CD8-positive, alpha-beta memory T cell (primary cell): ENCODE measurements at regions of chr4 and their contacts with region 1.

Region 1: GRCh38 chr4:42568610-42569207 is 88.2 kb downstream of the ATP8A1 start:
- DNase-seq: peak; percentile 40 to 68 (median 52)
- H3K4me3 ChIP-seq: no peak overlapping the region
- H3K4me3 Mint-ChIP-seq: no peak overlapping the region
- H3K27ac ChIP-seq: no peak overlapping the region
- H3K27ac Mint-ChIP-seq: peak overlapping the region in 4 of 8 donors; percentile 6 to 43 (median 28)
- H3K4me1 ChIP-seq: no peaks in the 10 kb centered on the region
- H3K4me1 Mint-ChIP-seq: peaks cover 0 to 4% (median 3%) of the 10 kb centered on the region in 3 donors
- H3K27me3 ChIP-seq: no peaks in the 10 kb centered on the region
- H3K27me3 Mint-ChIP-seq: no peaks in the 10 kb centered on the region

Region 2: GRCh38 chr4:42420140-42420539 is 148.6 kb before region 1 on chr4:
- CTCF ChIA-PET with region 1: no interaction called
- POLR2A ChIA-PET with region 1: no interaction called
- DNase-seq: no peak
- H3K4me3 ChIP-seq: no peak overlapping the region
- H3K4me3 Mint-ChIP-seq: no peak overlapping the region
- H3K27ac ChIP-seq: no peak overlapping the region
- H3K27ac Mint-ChIP-seq: peak overlapping the region in 1 of 8 donors; percentile 56
- H3K4me1 ChIP-seq: no peaks in the 10 kb centered on the region
- H3K4me1 Mint-ChIP-seq: no peaks in the 10 kb centered on the region
- H3K27me3 ChIP-seq: no peaks in the 10 kb centered on the region
- H3K27me3 Mint-ChIP-seq: peaks cover 0 to 2% of the 10 kb centered on the region in 2 donors

Region 3: DNA sequence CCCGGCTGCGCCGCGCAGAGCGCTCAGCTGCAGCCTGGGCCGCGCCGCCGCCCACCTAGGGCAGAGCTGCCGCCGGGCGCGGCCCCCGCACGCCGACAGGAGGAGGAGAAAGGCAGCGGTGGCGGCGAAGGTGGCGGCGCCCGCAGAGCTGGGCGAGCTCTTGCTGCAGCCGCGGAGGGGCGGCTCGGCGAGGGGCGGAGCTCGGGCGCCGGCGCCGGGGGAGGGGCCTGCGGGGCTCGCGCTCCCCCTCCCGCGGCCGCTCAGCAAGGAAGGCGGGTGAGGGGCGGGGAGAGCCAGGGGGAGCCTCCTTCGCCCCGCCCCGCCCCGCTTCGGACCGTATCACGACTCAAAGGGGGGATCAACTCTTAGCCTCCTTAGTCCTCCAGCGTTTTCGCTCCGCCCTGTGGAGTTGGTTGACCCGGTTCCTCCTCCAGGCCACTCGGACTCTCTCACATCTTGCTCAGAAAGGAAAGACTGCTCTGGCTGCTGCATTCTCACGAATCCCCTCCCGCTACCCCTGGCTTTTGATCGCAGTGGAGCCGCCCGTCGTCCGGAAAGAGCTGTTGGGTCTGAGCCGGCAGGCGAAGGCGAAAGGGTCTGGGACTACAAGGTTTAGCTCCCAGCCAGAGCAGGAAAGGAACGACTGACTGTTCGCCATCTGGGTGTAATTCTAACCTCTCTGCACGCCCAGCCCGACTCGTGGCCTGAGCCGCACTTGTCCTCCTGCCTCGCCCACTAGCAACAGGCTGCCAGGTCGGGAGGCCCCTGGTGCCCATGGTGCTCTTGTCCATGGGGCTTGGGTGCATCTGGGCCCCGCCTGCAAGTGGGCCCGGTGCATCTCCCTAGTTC is 88.5 kb after region 1 on chr4 and contains the start of gene ATP8A1:
- CTCF ChIA-PET with region 1: interaction called, 11 read pairs
- POLR2A ChIA-PET with region 1: no interaction called
- DNase-seq: peak; percentile 91 to 94 (median 93)
- H3K4me3 ChIP-seq: peak within 1 kb of the TSS; percentile 95
- H3K4me3 Mint-ChIP-seq: peak within 1 kb of the TSS; percentile 96 to 99 (median 97)
- H3K27ac ChIP-seq: peak within 1 kb of the TSS; percentile 67
- H3K27ac Mint-ChIP-seq: peak within 1 kb of the TSS; percentile 93 to 99 (median 97)
- H3K4me1 ChIP-seq: peaks cover 31% of the 10 kb centered on the region
- H3K4me1 Mint-ChIP-seq: peaks cover 48 to 50% (median 50%) of the 10 kb centered on the region in 3 donors
- H3K27me3 ChIP-seq: no peaks in the 10 kb centered on the region
- H3K27me3 Mint-ChIP-seq: peaks cover 0 to 1% of the 10 kb centered on the region in 2 donors
- total RNA-seq, gene ATP8A1: 23.3 to 24.4 TPM

Region 4: GRCh38 chr4:42750091-42750490 is 181.4 kb after region 1 on chr4:
- CTCF ChIA-PET with region 1: interaction called, 49 read pairs
- POLR2A ChIA-PET with region 1: no interaction called
- DNase-seq: peak in 4 of 5 donors; percentile 3 to 56 (median 40)
- H3K4me3 ChIP-seq: no peak overlapping the region
- H3K4me3 Mint-ChIP-seq: no peak overlapping the region
- H3K27ac ChIP-seq: no peak overlapping the region
- H3K27ac Mint-ChIP-seq: peak overlapping the region in 1 of 8 donors; percentile 21
- H3K4me1 ChIP-seq: no peaks in the 10 kb centered on the region
- H3K4me1 Mint-ChIP-seq: no peaks in the 10 kb centered on the region
- H3K27me3 ChIP-seq: no peaks in the 10 kb centered on the region
- H3K27me3 Mint-ChIP-seq: peaks cover 0 to 1% of the 10 kb centered on the region in 2 donors

Region 5: GRCh38 chr4:42865572-42866189 is 297.0 kb after region 1 on chr4:
- CTCF ChIA-PET with region 1: interaction called, 12 read pairs
- POLR2A ChIA-PET with region 1: no interaction called
- DNase-seq: peak in 4 of 5 donors; percentile 6 to 44 (median 28)
- H3K4me3 ChIP-seq: no peak overlapping the region
- H3K4me3 Mint-ChIP-seq: no peak overlapping the region
- H3K27ac ChIP-seq: no peak overlapping the region
- H3K27ac Mint-ChIP-seq: no peak overlapping the region
- H3K4me1 ChIP-seq: no peaks in the 10 kb centered on the region
- H3K4me1 Mint-ChIP-seq: no peaks in the 10 kb centered on the region
- H3K27me3 ChIP-seq: no peaks in the 10 kb centered on the region
- H3K27me3 Mint-ChIP-seq: peaks cover 13 to 30% of the 10 kb centered on the region in 2 donors